AG04449 (cell line): ENCODE measurements at regions of chr10 and their contacts with region 1.

Region 1: DNA sequence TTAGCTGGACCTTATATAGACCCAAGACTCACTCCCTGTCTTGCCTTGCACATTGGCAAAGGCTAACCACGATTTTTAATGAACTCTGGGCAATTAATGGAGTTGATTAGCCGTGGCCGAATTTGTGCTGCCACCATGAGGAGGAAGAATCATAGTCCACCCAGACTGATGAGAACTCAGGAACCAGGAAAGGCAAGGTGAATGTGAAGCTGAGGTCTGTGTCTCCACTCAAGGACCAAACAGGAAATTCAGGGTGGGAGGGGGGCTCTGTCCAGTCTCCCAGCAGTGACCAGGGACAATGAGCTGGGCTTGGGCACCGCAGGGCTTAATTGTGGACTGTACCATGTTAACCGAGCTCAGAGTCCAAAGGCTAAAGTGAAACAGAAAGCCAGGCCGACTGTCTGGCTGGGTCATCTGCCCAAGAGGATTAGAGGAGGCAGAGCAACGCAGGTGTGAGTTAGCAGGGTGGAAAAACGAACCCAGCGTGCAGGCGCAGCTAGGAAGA is 127.0 kb upstream of the JCAD start:
- DNase-seq: no peak
- H3K4me3 ChIP-seq: no peak overlapping the region
- CTCF ChIP-seq: peak; percentile 27

Region 2: DNA sequence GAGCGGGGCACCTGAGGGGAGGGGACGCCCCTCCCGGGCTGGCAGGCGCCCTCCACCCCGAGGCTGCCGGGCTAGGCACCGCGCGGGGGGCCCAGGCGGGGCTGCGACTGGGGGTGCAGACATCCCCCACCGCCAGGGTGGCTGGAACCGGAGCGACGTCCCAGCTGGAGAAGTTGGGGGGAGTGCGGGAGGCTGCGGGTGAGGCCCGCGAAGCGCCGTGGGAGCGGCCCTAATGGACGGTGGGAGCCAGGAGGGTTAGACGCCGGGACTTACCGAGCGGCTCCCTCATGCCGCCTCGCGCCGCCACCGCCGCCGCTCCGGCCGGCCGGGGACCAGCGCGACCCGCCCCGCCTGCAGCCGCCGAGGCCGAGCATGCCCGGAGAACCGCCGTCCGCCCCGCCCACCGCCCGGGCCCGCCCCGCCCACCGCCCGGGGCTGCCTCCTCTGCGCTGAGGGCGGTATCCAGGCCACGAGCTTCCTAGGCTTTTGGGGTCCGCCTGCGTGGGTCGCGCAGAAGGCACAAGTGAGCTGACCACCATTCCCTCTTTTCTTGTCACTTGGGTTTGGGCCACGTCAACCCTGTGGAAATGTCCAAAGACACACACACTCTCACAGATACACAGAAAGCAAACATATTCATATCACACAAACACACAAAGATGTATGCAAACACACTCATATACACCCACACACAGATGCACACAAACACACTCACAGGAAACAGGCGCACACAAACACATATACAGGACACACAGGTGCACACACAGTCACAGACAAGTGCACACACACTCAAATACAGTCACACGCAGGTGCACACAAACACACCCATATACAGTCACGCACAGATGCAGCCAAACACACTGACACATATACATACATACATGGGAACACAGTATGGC is 127.0 kb before region 1 on chr10 and contains the start of gene JCAD:
- CTCF ChIA-PET with region 1: interaction called, 5 read pairs
- POLR2A ChIA-PET with region 1: interaction called, 11 read pairs
- DNase-seq: no peak
- H3K4me3 ChIP-seq: peak within 1 kb of the TSS; percentile 83
- CTCF ChIP-seq: no peak

Region 3: DNA sequence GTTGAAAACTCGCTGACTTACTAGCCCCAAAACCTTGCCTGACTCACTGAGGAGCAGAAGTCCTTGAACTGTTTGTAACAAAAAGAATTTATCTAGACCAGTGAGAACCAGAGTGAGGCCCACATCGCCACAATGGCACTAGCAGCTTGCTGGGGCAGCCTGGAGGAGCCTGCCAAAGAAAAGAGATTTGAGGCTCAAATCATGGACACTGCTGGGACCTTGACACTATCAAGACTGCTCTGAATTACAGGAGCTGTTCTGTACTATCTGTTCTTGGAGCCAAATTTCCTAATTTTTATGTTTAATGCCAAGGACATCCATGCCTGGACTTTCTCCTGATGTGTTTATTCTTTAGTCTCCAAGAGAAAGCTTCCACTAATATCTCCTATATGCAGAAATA is 45.0 kb before region 1 on chr10:
- CTCF ChIA-PET with region 1: no interaction called
- POLR2A ChIA-PET with region 1: no interaction called
- DNase-seq: no peak
- H3K4me3 ChIP-seq: no peak overlapping the region
- CTCF ChIP-seq: no peak

Region 4: DNA sequence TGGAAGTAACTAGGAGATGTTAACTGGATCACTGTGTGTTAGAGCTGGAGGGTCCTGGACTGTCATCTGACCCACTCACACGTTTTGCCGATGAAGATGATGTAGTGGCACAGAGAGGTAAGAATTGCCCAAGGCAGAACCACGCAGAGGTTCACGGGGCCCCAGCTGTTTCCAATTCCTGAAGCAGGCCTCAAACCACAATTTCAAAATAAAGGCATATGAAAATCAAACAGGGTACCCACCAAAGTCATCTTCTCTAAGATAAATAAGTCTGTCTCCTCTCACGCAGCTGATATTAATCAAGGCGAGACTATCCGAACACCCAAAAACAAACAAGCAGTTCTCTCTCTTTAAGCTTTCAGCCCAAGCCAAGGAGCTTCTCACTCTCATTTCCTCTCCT is 13.8 kb before region 1 on chr10:
- CTCF ChIA-PET with region 1: interaction called, 5 read pairs
- POLR2A ChIA-PET with region 1: interaction called, 34 read pairs
- DNase-seq: peak; percentile 49
- H3K4me3 ChIP-seq: no peak overlapping the region
- CTCF ChIP-seq: no peak

Region 5: DNA sequence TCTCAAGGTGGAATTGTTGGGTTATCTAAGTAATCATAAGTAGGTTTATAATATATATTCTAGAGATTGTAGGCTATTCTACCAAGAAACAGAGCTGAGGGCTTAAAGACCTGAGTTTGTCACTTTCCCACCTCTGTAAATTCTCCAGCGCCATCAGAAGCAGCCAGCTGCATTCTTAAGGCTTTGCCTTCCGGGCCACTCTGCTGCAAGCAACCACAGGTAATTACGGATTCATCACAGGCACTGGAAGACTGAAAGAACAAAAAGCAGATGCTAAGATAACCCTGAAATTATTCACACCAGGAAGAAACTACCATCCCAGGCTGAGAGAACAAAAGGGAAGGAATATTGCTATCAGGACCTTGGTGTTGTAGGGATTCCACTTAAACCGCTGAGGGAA is 10.8 kb after region 1 on chr10:
- CTCF ChIA-PET with region 1: interaction called, 11 read pairs
- POLR2A ChIA-PET with region 1: no interaction called
- DNase-seq: no peak
- H3K4me3 ChIP-seq: no peak overlapping the region
- CTCF ChIP-seq: no peak